Dorsolateral prefrontal cortex (tissue), 120 donors: ENCODE measurements at regions of chr12 and their contacts with region 1.

Region 1: GRCh38 chr12:22856178-22856577 is 231.2 kb downstream of the ETNK1 start:
- DNase-seq: no peak
- H3K4me3 ChIP-seq: no peak overlapping the region
- H3K27ac ChIP-seq: no peak overlapping the region
- H3K27me3 ChIP-seq: peaks cover 0 to 4% (median 0%) of the 10 kb centered on the region in 45 donors
- CTCF ChIP-seq: peak; percentile 49 to 82 (median 67)

Region 2: GRCh38 chr12:24778486-24779304 is 1922.5 kb after region 1 on chr12:
- intact Hi-C with region 1: loop called in 1 of 2 experiments (anchors 5 kb)
- DNase-seq: no peak
- H3K4me3 ChIP-seq: no peak overlapping the region
- H3K27ac ChIP-seq: no peak overlapping the region
- H3K27me3 ChIP-seq: peaks cover 0 to 8% (median 0%) of the 10 kb centered on the region in 45 donors
- CTCF ChIP-seq: peak in 55 of 56 donors; percentile 19 to 77 (median 58)

Region 3: GRCh38 chr12:24838531-24838950 is 1982.4 kb after region 1 on chr12:
- intact Hi-C with region 1: loop called in 1 of 2 experiments (anchors 5 kb)
- DNase-seq: peak in 1 of 10 donors; percentile 16
- H3K4me3 ChIP-seq: no peak overlapping the region
- H3K27ac ChIP-seq: peak overlapping the region in 34 of 59 donors; percentile 2 to 73 (median 46)
- H3K27me3 ChIP-seq: no peaks in the 10 kb centered on the region
- CTCF ChIP-seq: no peak